ENCODE measurements at regions of chr4 and their contacts with region 1.

Region 1: GRCh38 chr4:105146276-105147015 is at the start of gene TET2:
- DNase-seq: peak; percentile 78
- H3K4me3 ChIP-seq: peak within 1 kb of the TSS; percentile 81 to 93 (median 87)
- H3K27ac ChIP-seq: peak within 1 kb of the TSS; percentile 83 to 93 (median 86)
- H3K4me1 ChIP-seq: peaks cover 6 to 31% (median 19%) of the 10 kb centered on the region in 4 donors
- H3K27me3 ChIP-seq: no peaks in the 10 kb centered on the region
- CTCF ChIP-seq: peak in 1 of 5 experiments; percentile 26
- EP300 ChIP-seq: no peak
- POLR2A ChIP-seq: peak; percentile 60
- total RNA-seq, gene TET2: 23.9 to 33.6 (median 29.5) TPM

Region 2: DNA sequence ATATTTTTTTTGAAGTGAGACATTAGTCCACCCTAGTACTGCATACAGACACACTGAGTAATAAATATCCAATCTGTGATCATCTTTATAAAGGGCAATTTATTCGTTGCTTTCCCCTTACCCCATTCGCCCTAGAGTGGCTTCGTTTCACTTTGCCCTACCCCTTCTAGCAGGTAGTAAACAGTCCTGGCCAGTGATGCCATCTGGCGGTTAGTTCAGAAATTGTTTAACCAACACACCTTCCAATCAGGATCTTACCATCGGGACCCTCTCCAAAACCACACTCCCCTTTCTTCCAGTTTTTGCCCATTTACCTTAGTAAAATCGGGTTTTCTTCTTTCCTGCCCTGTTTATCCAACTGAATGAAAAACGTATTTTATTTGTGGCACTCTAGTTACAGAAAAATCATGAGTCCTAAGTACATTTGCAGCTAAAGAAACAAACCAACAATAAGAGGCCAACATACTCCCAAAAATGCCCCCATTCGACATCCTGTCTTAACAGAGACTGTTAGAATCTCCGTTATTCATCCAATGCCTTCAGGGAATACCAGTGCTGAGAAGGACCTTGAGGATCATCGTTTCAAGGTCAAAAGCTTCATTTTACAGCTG is 325.2 kb after region 1 on chr4:
- in situ Hi-C with region 1: loop called in 2 of 4 experiments (anchors 5 to 10 kb)
- intact Hi-C with region 1: loop called (anchors 1 kb)
- DNase-seq: peak; percentile 78
- H3K4me3 ChIP-seq: peak overlapping the region in 2 of 4 donors; percentile 83 to 85
- H3K27ac ChIP-seq: peak overlapping the region; percentile 98 to 100 (median 98)
- H3K4me1 ChIP-seq: peaks cover 11 to 41% (median 22%) of the 10 kb centered on the region in 4 donors
- H3K27me3 ChIP-seq: no peaks in the 10 kb centered on the region
- CTCF ChIP-seq: peak; percentile 68 to 81 (median 69)
- EP300 ChIP-seq: no peak
- POLR2A ChIP-seq: no peak

Region 3: GRCh38 chr4:105708530-105709391 is 562.3 kb after region 1 on chr4 and contains the starts of genes GSTCD and INTS12:
- in situ Hi-C with region 1: loop called in 2 of 4 experiments (anchors 25 kb)
- intact Hi-C with region 1: no loop called
- DNase-seq: peak; percentile 94
- H3K4me3 ChIP-seq: peak within 1 kb of the TSS; percentile 70 to 96 (median 80)
- H3K27ac ChIP-seq: peak within 1 kb of the TSS; percentile 86 to 93 (median 90)
- H3K4me1 ChIP-seq: peaks cover 12 to 22% (median 19%) of the 10 kb centered on the region in 4 donors
- H3K27me3 ChIP-seq: no peaks in the 10 kb centered on the region
- CTCF ChIP-seq: no peak
- EP300 ChIP-seq: peak; percentile 31
- POLR2A ChIP-seq: peak; percentile 81
- total RNA-seq, gene GSTCD: 0.40 to 11.1 (median 8.4) TPM
- total RNA-seq, gene INTS12: 4.5 to 37.0 (median 22.0) TPM

Measured in transverse colon (tissue), 4 donors.